Endothelial cell of umbilical vein (primary cell): ENCODE measurements at regions of chrX and their contacts with region 1.

Region 1: DNA sequence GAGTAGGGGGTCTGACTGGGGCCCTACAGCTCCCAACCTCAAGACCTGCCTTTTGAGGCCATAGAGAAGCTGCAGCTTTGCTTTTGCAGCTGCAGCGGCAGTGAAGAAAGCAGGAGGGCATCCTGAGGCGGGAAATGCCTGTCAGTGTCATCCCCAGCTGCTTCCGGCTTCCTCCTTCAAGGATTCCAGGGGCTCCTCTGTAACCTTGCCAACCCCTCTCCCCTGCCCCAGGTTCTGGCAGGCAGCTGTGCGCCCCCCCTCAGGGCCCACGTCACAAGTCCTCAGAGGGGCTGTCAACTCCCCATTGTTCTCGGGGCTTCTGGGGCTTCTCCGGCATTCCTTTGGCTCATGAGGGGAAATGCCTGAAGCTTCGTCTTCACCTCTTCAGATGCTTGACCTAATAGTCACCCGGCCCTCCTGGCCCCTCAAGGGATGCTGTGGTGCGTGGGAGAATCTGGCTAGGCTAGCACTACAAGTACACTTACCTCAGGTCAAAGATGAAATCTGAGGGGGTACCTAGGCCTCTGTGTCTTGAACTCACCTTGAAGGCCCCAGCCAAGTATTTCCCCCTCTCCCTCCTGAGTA is 31.9 kb downstream of the APLN start:
- DNase-seq: peak; percentile 85
- H3K4me3 ChIP-seq: no peak overlapping the region
- H3K27ac ChIP-seq: peak overlapping the region; percentile 99
- H3K4me1 ChIP-seq: peaks cover 18% of the 10 kb centered on the region
- H3K27me3 ChIP-seq: no peaks in the 10 kb centered on the region
- CTCF ChIP-seq: no peak
- POLR2A ChIP-seq: no peak

Region 2: GRCh38 chrX:129347291-129347690 is 275.6 kb before region 1 on chrX:
- CTCF ChIA-PET with region 1: no interaction called
- POLR2A ChIA-PET with region 1: no interaction called
- dilution Hi-C with region 1: no loop called
- intact Hi-C with region 1: no loop called
- DNase-seq: no peak
- H3K4me3 ChIP-seq: no peak overlapping the region
- H3K27ac ChIP-seq: no peak overlapping the region
- H3K4me1 ChIP-seq: no peaks in the 10 kb centered on the region
- H3K27me3 ChIP-seq: no peaks in the 10 kb centered on the region
- CTCF ChIP-seq: peak in 1 of 2 donors; percentile 12
- POLR2A ChIP-seq: no peak

Region 3: DNA sequence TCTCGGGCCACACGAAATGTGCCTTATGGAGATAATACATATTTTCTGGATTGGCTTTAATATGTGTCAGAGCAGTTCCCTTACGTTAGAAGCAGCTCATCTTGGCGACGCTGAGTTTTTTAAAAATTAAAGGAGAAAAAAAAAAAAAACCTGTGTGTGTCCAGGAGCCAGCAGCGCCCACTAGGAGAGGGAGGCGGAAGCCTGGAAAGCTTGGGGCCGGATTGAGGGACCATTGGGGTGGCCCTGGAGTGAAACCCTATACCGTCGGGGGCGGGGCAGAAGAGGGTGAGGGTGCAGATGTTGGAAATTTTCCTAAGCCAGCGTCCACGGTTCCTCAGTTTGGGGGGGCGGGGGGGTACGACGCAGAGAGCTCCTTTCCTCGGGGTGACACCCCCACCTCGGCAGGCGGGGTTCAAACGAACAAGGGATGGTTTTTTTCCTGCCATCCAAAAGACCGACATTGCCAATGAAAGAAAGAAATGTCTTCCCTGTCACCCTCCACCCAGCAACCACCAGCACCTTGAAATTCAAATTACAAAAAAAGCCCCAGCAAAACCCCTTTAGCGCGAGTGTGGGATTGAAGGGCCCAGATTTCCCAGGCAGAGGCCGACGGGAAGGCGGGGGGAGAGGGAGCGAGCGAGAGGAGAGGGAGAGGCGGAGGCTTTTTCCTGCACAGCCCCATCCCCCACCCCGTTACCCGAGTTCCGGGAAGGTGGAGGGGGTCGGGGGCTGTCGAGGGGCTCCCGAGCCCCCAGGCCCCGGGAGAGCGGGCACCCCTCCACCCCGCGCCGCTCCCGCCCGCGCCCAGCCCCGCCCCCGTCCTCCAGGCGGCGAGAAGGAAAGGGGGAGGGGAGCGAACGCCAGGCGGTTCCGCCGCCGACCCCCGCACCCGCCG is 100.4 kb before region 1 on chrX:
- CTCF ChIA-PET with region 1: no interaction called
- POLR2A ChIA-PET with region 1: no interaction called
- dilution Hi-C with region 1: no loop called
- intact Hi-C with region 1: no loop called
- DNase-seq: peak; percentile 42
- H3K4me3 ChIP-seq: peak overlapping the region; percentile 68 to 88 (median 85)
- H3K27ac ChIP-seq: no peak overlapping the region
- H3K4me1 ChIP-seq: peaks cover 5% of the 10 kb centered on the region
- H3K27me3 ChIP-seq: peaks cover 0 to 10% of the 10 kb centered on the region in 2 experiments
- CTCF ChIP-seq: no peak
- POLR2A ChIP-seq: no peak

Region 4: DNA sequence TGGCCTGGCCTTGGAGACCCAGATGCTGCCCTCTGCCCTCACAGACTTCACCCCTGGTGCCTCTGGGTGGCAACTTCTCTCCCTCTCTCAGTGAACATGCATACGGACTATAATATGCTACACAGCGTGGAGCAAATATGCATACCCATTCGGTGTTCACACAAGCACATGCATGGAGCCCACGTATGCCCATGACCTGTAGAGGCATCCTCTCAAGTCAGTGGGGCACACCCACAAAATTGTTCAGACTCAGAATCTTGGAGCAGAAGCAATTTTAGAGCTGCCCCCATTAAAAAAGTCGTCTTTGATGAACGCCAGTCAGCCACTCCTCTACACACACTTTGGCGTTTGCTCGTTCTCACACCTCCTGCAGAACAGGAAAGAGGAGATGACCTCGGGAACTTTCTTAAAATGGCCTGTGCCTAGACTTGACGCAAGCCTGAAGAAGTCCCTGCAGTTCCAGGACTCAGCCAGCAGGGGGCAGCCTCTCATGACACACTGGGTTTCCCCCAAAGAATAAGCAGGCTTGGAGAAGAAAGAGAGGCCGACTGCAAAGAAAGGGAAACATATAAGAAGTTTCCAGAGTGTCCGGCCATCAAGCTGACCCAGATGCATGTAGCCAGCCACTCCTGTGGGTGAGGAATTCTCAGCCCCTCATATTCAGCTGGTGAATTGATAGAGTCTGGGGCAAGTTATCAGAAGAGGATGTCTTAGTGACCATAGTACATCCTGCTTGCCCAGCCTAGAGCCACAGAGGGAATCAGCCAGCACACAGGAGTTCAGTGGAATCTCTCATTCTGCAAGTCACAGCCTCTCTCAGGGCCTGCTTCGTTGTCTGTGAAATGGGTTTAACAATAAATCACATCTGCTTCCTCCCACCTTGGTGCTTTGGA is 14.6 kb after region 1 on chrX:
- CTCF ChIA-PET with region 1: interaction called, 16 read pairs
- POLR2A ChIA-PET with region 1: no interaction called
- dilution Hi-C with region 1: no loop called
- intact Hi-C with region 1: loop called (anchors 1 kb)
- DNase-seq: peak; percentile 69
- H3K4me3 ChIP-seq: no peak overlapping the region
- H3K27ac ChIP-seq: peak overlapping the region; percentile 1
- H3K4me1 ChIP-seq: peaks cover 7% of the 10 kb centered on the region
- H3K27me3 ChIP-seq: no peaks in the 10 kb centered on the region
- CTCF ChIP-seq: peak; percentile 78 to 79
- POLR2A ChIP-seq: no peak

Region 5: DNA sequence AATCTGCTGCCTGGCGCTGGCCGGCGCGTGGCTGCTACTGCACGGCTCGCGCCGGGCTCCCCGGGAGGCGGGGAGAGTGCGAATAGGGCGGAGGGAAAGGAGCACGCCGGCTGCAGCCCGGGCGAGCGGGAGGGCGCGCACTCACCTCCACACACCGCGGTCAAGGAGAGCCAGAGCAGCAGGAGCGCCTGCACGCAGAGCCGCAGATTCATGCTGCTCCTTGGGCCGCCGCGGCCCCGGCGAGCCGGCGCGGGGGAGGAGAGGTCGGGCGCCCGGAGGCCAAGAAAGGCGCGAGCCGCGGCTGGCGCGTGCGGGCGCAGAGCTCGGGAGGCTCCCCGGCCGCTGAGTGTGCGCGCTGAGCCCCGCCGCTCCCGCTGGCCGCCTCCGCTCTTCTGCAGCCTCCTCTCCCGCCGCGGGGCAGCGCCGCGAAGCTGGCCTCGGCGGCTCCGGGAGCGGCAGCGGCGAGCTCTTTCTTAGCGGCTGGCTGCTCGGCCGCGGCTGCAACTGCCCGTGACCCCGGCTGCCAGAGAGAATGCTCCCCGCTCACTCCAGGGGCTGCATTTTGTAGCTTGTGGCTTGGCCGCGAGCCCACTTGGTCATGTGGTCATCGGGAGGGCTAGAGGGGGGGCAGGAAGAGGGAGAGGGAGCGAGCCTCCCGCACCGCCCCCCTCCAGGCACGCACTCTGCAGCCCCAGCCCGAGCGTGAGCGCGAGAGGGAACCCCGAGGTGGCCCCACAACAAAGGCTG is 31.7 kb after region 1 on chrX and contains the start of gene APLN:
- CTCF ChIA-PET with region 1: interaction called, 3 read pairs
- POLR2A ChIA-PET with region 1: interaction called, 10 read pairs
- dilution Hi-C with region 1: no loop called
- intact Hi-C with region 1: no loop called
- DNase-seq: peak; percentile 55
- H3K4me3 ChIP-seq: peak within 1 kb of the TSS; percentile 58 to 78 (median 67)
- H3K27ac ChIP-seq: peak within 1 kb of the TSS; percentile 69
- H3K4me1 ChIP-seq: peaks cover 42% of the 10 kb centered on the region
- H3K27me3 ChIP-seq: no peaks in the 10 kb centered on the region
- CTCF ChIP-seq: no peak
- POLR2A ChIP-seq: peak; percentile 92
- total RNA-seq, gene APLN: 465 and 466 TPM in 2 replicates

Region 6: GRCh38 chrX:129665910-129666644 is 43.2 kb after region 1 on chrX:
- CTCF ChIA-PET with region 1: no interaction called
- POLR2A ChIA-PET with region 1: interaction called, 4 read pairs
- dilution Hi-C with region 1: no loop called
- intact Hi-C with region 1: loop called (anchors 1 kb)
- DNase-seq: peak; percentile 87
- H3K4me3 ChIP-seq: no peak overlapping the region
- H3K27ac ChIP-seq: peak overlapping the region; percentile 88
- H3K4me1 ChIP-seq: peaks cover 56% of the 10 kb centered on the region
- H3K27me3 ChIP-seq: no peaks in the 10 kb centered on the region
- CTCF ChIP-seq: no peak
- POLR2A ChIP-seq: peak; percentile 2

Region 7: GRCh38 chrX:129843459-129844306 is 220.8 kb after region 1 on chrX and contains the start of gene ZDHHC9:
- CTCF ChIA-PET with region 1: no interaction called
- POLR2A ChIA-PET with region 1: interaction called, 12 read pairs
- dilution Hi-C with region 1: no loop called
- intact Hi-C with region 1: no loop called
- DNase-seq: peak; percentile 88
- H3K4me3 ChIP-seq: peak within 1 kb of the TSS; percentile 64 to 90 (median 69)
- H3K27ac ChIP-seq: peak within 1 kb of the TSS; percentile 59
- H3K4me1 ChIP-seq: peaks cover 4% of the 10 kb centered on the region
- H3K27me3 ChIP-seq: peaks cover 3 to 6% of the 10 kb centered on the region in 2 experiments
- CTCF ChIP-seq: no peak
- POLR2A ChIP-seq: peak; percentile 28
- total RNA-seq, gene ZDHHC9: 33.6 and 38.2 TPM in 2 replicates